ENCODE measurements at regions of chr1 and their contacts with region 1.

Region 1: GRCh38 chr1:224644553-224645154 is 28.5 kb downstream of the CNIH3 start:
- DNase-seq: peak in 2 of 6 donors; percentile 63 to 68
- ATAC-seq: peak in 3 of 4 donors; percentile 65 to 78 (median 73)
- H3K4me3 ChIP-seq: no peak overlapping the region
- H3K27ac ChIP-seq: no peak overlapping the region
- H3K4me1 ChIP-seq: peaks cover 0 to 8% (median 7%) of the 10 kb centered on the region in 3 donors
- H3K27me3 ChIP-seq: no peaks in the 10 kb centered on the region
- CTCF ChIP-seq: peak; percentile 81 to 90 (median 86)

Region 2: GRCh38 chr1:224579526-224579925 is 65.1 kb before region 1 on chr1:
- intact Hi-C with region 1: no loop called
- DNase-seq: no peak
- ATAC-seq: no peak
- H3K4me3 ChIP-seq: no peak overlapping the region
- H3K27ac ChIP-seq: no peak overlapping the region
- H3K4me1 ChIP-seq: peaks cover 0 to 6% (median 0%) of the 10 kb centered on the region in 3 donors
- H3K27me3 ChIP-seq: no peaks in the 10 kb centered on the region
- CTCF ChIP-seq: no peak

Region 3: GRCh38 chr1:224851210-224851847 is 206.7 kb after region 1 on chr1:
- intact Hi-C with region 1: loop called in 1 of 3 experiments (anchors 10 kb)
- DNase-seq: peak; percentile 49 to 81 (median 77)
- ATAC-seq: peak; percentile 65 to 74 (median 74)
- H3K4me3 ChIP-seq: no peak overlapping the region
- H3K27ac ChIP-seq: peak overlapping the region in 3 of 4 donors; percentile 43 to 69 (median 63)
- H3K4me1 ChIP-seq: peaks cover 0 to 10% (median 7%) of the 10 kb centered on the region in 3 donors
- H3K27me3 ChIP-seq: no peaks in the 10 kb centered on the region
- CTCF ChIP-seq: peak; percentile 42 to 51 (median 50)

Region 4: DNA sequence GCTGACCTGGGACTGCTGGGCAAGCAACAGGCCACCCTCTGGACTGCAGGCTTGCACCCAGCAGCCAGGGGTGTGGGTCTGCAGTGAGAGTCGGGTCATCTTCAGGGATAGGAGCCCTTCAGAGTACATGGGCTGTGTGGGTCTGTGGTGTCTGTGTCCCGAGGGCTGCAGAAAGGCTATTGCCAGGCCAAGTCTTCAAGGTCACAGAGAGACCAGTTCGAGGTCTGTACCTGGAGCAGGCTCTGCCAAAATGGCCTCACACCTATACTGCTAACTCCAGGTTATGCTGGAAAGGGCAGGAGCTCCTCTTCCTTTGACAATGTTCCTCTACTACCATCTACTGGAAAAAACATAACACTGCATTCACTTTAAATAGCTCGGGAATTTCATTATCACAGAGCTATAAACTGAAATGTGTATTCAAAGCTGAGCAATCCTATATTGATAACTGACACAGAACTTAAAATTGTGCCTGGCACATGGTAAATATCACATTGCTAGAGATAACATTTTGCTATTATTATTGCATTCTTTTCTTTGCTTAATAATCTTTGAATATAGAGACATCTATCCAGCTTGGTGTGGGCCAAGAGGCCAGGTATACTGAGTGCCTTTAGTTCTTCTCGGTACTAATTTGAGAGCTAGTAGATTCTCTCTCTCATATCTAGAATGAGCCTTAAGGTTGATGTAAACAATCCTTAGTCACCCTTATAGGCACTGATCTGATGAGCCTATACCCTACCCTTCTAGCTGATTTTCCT is 277.9 kb after region 1 on chr1:
- intact Hi-C with region 1: loop called in 1 of 3 experiments (anchors 10 kb)
- DNase-seq: peak in 5 of 6 donors; percentile 30 to 59 (median 35)
- ATAC-seq: peak; percentile 88 to 97 (median 96)
- H3K4me3 ChIP-seq: no peak overlapping the region
- H3K27ac ChIP-seq: no peak overlapping the region
- H3K4me1 ChIP-seq: peaks cover 0 to 12% (median 10%) of the 10 kb centered on the region in 3 donors
- H3K27me3 ChIP-seq: no peaks in the 10 kb centered on the region
- CTCF ChIP-seq: peak; percentile 30 to 72 (median 60)

Measured in pancreas (tissue), 10 donors.